ENCODE measurements at regions of chr21 and their contacts with region 1.

Region 1: DNA sequence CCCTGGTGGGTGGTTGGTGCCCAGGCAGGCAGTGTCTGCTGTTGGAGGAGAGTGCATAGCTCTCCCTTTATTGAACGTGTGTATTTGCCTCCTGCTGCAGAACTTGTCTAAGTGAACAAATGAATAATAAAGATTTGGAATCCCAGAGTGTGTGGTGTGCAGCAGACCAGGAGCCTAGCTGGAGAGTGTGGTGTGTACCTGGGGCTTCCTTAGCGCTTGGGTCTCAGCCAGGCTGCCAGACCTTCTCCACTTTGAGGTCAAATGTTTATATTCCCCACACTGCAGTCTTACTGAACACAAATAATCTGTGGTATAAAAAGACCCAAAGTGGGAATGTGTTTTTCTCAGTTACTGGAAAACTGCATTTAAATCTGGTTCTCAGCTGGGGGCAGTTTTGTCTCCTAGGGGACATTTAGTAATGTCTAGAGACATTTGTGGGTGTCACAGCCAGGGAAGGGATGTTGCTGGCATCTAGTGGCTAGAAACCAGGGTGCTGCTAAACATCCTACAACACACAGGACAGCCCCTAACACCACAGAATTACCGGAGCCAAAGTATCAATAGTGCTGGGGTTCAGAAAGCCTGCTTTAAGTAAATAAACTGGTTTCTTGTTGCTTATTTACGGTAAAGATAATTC is 23.6 kb downstream of the SLC37A1 start:
- DNase-seq: peak; percentile 69
- ATAC-seq: no peak
- H3K4me3 ChIP-seq: no peak overlapping the region
- H3K4me3 Mint-ChIP-seq: peak overlapping the region; percentile 17
- H3K27ac ChIP-seq: peak overlapping the region in 1 of 2 donors; percentile 88
- H3K27ac Mint-ChIP-seq: peak overlapping the region; percentile 84
- H3K4me1 ChIP-seq: peaks cover 51% of the 10 kb centered on the region in 2 donors
- H3K4me1 Mint-ChIP-seq: peaks cover 58% of the 10 kb centered on the region
- H3K27me3 ChIP-seq: no peaks in the 10 kb centered on the region
- H3K27me3 Mint-ChIP-seq: no peaks in the 10 kb centered on the region
- CTCF ChIP-seq: peak; percentile 72

Region 2: DNA sequence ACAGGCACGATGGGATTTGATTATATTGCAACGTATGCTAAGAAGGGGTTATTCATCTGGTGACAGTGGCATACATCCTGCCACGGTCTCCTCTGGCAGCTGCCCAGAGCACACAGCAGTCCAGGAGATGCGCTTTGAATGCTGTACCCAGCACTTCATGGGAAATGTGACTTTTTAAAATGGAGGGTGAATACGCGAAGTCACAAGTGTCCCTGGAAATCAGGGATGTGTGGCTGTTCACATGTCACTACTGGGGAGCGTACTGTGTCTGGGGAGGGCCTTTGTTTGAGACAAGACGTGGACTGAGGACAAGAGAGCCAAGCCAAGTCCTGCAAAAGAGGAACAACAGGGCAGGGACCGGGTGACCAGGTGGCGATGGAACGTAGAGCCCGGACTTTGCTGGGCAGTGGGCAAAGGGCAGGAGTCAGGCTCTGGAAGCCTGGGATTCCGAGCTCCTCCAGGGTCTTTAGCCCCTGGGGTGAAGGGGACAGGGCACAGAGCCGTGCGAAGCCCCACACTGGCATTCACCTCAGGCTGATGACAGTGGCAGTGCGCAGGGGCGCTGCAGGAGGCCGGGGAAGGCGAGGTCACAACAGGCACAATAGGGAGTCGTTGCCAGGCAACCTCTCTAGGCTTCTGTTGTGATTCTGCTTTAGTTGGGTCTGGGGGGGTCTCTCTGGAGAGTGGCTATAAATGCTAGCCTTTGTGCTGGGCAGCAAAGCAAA is 515.7 kb before region 1 on chr21:
- CTCF ChIA-PET with region 1: no interaction called
- POLR2A ChIA-PET with region 1: no interaction called
- intact Hi-C with region 1: no loop called
- DNase-seq: no peak
- ATAC-seq: no peak
- H3K4me3 ChIP-seq: no peak overlapping the region
- H3K4me3 Mint-ChIP-seq: no peak overlapping the region
- H3K27ac ChIP-seq: no peak overlapping the region
- H3K27ac Mint-ChIP-seq: no peak overlapping the region
- H3K4me1 ChIP-seq: no peaks in the 10 kb centered on the region
- H3K4me1 Mint-ChIP-seq: peaks cover 2% of the 10 kb centered on the region
- H3K27me3 ChIP-seq: no peaks in the 10 kb centered on the region
- H3K27me3 Mint-ChIP-seq: peaks cover 7% of the 10 kb centered on the region
- CTCF ChIP-seq: no peak

Region 3: DNA sequence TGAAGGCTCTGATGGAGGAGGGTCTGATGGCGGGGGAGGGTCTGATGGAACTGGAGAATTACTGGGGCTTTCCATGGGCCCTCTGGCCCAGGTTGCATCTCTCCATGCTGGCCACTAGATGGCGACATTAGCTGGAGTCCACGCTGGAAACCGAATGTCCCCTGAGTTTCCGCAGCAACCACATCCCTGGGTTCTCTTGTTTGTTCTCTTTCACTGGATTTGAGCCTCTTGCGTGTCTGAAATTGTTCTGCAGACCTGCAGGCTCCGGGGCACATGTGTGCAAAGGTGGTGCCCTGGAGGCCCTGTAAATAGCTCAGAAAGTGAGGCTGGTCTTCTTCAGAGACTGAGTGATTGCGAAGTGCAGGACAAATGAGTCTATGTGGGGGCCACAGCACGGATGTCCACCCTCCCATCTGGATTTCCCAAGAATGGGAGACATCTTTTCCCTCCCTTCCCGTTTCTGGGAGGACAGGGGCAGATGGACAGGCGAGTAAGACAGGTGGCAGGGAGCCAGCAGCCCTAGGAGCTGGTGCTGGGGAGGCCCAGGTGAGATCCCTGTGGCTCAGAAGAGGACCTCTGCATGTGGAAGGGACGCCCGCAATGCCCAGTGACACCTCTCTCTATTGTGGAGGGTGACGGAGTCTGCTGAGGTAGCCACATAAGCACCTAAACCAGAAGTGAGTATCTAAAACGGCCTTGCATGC is 391.5 kb before region 1 on chr21:
- CTCF ChIA-PET with region 1: interaction called, 20 read pairs
- POLR2A ChIA-PET with region 1: no interaction called
- intact Hi-C with region 1: loop called (anchors 1 kb)
- DNase-seq: peak; percentile 79
- ATAC-seq: peak; percentile 84
- H3K4me3 ChIP-seq: no peak overlapping the region
- H3K4me3 Mint-ChIP-seq: no peak overlapping the region
- H3K27ac ChIP-seq: no peak overlapping the region
- H3K27ac Mint-ChIP-seq: no peak overlapping the region
- H3K4me1 ChIP-seq: peaks cover 1 to 6% of the 10 kb centered on the region in 2 donors
- H3K4me1 Mint-ChIP-seq: peaks cover 7% of the 10 kb centered on the region
- H3K27me3 ChIP-seq: no peaks in the 10 kb centered on the region
- H3K27me3 Mint-ChIP-seq: no peaks in the 10 kb centered on the region
- CTCF ChIP-seq: peak; percentile 91

Region 4: GRCh38 chr21:42258153-42258884 is 278.9 kb before region 1 on chr21:
- CTCF ChIA-PET with region 1: interaction called, 10 read pairs
- POLR2A ChIA-PET with region 1: no interaction called
- intact Hi-C with region 1: no loop called
- DNase-seq: peak; percentile 85
- ATAC-seq: peak; percentile 96
- H3K4me3 ChIP-seq: no peak overlapping the region
- H3K4me3 Mint-ChIP-seq: no peak overlapping the region
- H3K27ac ChIP-seq: no peak overlapping the region
- H3K27ac Mint-ChIP-seq: no peak overlapping the region
- H3K4me1 ChIP-seq: peaks cover 37 to 53% of the 10 kb centered on the region in 2 donors
- H3K4me1 Mint-ChIP-seq: peaks cover 48% of the 10 kb centered on the region
- H3K27me3 ChIP-seq: peaks cover 0 to 3% (median 0%) of the 10 kb centered on the region in 4 experiments
- H3K27me3 Mint-ChIP-seq: no peaks in the 10 kb centered on the region
- CTCF ChIP-seq: peak; percentile 89

Region 5: GRCh38 chr21:42360317-42360716 is 176.9 kb before region 1 on chr21:
- CTCF ChIA-PET with region 1: interaction called, 11 read pairs
- POLR2A ChIA-PET with region 1: no interaction called
- intact Hi-C with region 1: no loop called
- DNase-seq: no peak
- ATAC-seq: no peak
- H3K4me3 ChIP-seq: no peak overlapping the region
- H3K4me3 Mint-ChIP-seq: no peak overlapping the region
- H3K27ac ChIP-seq: no peak overlapping the region
- H3K27ac Mint-ChIP-seq: no peak overlapping the region
- H3K4me1 ChIP-seq: no peaks in the 10 kb centered on the region
- H3K4me1 Mint-ChIP-seq: no peaks in the 10 kb centered on the region
- H3K27me3 ChIP-seq: peaks cover 0 to 17% (median 4%) of the 10 kb centered on the region in 4 experiments
- H3K27me3 Mint-ChIP-seq: peaks cover 43% of the 10 kb centered on the region
- CTCF ChIP-seq: no peak

Region 6: DNA sequence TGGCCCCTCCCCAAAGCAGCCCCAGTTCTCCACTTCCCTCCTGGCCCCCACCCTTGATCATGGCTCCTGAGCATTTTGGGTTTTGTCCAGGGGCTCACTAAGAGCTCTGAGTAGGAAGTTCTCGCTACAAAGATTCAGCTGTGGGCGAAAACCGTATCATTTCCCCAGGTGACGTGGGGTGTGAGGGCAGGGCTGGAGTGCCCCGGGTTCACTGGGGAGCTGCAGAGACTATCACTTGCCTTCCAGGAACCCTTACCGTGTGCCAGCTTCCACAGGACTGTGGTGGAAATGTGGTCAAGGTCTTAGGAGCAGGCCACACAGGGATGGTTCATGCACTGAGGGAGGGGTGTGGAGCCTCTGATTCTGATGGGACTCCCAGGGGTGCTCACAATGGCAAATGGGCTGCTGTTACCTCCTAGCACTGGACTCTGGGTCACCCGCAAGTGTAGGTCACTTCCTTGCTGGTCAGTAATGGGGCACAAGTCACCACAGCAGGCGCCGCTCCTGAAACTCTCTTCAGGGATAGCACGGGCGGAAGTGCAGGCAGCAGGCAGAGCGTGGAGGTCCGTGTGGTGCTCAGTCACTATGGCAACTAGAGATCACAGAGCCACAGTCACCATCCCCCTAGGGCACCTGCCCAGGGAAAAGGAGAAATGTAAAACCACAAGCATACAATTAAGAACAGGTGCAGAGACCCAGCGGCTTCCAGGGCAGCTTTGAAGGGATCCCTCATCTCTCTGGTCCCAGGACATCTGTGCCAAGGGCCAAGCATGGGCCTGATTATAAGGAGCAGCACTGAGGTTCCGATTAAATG is 76.6 kb before region 1 on chr21:
- CTCF ChIA-PET with region 1: interaction called, 16 read pairs
- POLR2A ChIA-PET with region 1: interaction called, 4 read pairs
- intact Hi-C with region 1: loop called (anchors 2 kb)
- DNase-seq: peak; percentile 94
- ATAC-seq: peak; percentile 69
- H3K4me3 ChIP-seq: peak overlapping the region in 4 of 5 experiments; percentile 20 to 67 (median 40)
- H3K4me3 Mint-ChIP-seq: peak overlapping the region; percentile 88
- H3K27ac ChIP-seq: peak overlapping the region; percentile 83 to 93
- H3K27ac Mint-ChIP-seq: peak overlapping the region; percentile 99
- H3K4me1 ChIP-seq: peaks cover 60% of the 10 kb centered on the region in 2 donors
- H3K4me1 Mint-ChIP-seq: peaks cover 59% of the 10 kb centered on the region
- H3K27me3 ChIP-seq: no peaks in the 10 kb centered on the region
- H3K27me3 Mint-ChIP-seq: no peaks in the 10 kb centered on the region
- CTCF ChIP-seq: no peak

Region 7: DNA sequence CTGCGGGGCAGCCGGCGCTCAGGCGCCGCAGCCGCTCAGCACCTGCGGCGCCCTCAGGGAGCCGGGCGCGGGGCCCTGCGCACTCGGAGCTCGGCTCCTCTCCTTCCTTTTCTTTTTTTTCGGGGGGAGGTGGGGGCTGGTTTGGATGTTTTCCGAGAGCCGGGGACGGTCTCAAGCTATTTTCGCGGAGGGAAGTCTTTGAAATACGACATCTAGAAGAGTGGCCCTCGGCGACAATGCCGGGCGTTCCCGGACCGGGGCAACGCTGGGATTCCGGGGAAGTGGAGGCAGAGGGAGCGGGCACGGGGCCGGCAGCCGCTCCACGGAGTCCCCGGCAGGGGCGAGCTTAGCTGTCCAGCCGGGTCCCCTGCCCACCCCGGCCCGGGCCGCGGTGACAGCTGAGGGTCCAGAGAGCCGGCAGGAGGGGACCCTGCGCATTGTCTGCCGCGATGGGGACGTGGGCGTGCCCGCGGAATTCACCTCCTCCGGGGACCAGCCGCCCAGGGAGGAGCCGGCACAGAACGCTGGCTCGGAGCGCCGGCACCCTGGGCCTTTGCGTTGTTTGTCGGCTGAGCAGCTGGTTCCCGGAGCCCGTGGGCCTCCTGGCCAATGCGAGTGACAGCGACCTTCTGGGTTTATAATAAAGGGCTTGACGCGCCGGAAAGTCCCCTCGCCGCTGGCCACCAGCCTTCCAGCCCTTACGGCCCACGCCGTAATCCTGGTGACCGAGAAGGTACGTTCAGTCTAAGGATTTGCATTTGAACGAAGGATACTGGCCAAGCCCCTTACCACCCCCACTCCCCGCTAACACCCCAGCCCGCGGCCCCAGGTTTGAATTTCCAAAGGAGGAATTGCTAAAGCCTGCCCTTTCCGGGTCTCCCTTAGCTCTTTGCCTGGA is 23.0 kb before region 1 on chr21:
- CTCF ChIA-PET with region 1: interaction called, 17 read pairs
- POLR2A ChIA-PET with region 1: interaction called, 3 read pairs
- intact Hi-C with region 1: loop called (anchors 1 kb)
- DNase-seq: peak; percentile 81
- ATAC-seq: peak; percentile 74
- H3K4me3 ChIP-seq: peak overlapping the region; percentile 63 to 94 (median 84)
- H3K4me3 Mint-ChIP-seq: peak overlapping the region; percentile 88
- H3K27ac ChIP-seq: peak overlapping the region; percentile 90 to 91
- H3K27ac Mint-ChIP-seq: peak overlapping the region; percentile 77
- H3K4me1 ChIP-seq: peaks cover 14 to 26% of the 10 kb centered on the region in 2 donors
- H3K4me1 Mint-ChIP-seq: peaks cover 39% of the 10 kb centered on the region
- H3K27me3 ChIP-seq: no peaks in the 10 kb centered on the region
- H3K27me3 Mint-ChIP-seq: no peaks in the 10 kb centered on the region
- CTCF ChIP-seq: no peak

Measured in B cell (primary cell).